ENCODE measurements at regions of chr11 and their contacts with region 1.

Region 1: DNA sequence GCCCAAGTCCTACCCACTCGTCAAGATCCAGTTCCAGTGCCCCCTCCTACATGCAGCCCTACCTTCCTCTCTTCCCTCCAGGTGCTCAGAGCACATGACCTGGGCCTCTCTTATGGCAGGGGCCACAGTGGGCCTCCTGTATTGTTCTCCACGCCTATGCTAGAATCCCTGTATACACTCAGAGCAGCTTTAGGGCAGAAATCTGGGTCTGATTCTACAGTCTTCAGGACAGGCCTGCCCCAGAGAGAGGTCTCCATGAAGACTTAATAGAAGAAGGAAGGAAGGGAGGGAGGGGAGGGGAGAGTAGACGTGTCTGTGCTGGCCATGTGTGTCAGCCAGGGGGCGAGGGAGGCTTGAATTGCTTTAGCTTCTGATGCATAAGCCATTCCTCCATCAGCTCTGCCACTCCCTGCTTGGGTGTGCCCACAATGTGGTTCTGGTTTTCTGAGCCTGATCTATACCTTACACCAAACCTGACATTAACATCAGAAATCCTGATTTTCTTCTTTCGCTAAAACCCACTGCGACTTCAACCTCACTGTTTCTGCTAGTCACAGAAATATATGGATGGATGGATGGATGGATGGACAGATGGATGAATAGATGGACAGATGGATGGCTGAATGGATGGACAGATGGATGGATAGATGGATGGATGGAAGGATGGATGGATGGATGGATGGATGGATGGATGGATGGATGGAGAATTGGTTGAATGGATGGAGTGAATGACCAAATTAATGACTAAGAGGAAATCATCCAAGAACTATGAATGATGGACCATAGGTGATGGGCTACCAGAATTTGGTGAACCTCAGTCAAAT is 56.6 kb upstream of the PRDM11 start:
- DNase-seq: peak in 3 of 42 donors; percentile 7 to 35 (median 22)

Region 2: DNA sequence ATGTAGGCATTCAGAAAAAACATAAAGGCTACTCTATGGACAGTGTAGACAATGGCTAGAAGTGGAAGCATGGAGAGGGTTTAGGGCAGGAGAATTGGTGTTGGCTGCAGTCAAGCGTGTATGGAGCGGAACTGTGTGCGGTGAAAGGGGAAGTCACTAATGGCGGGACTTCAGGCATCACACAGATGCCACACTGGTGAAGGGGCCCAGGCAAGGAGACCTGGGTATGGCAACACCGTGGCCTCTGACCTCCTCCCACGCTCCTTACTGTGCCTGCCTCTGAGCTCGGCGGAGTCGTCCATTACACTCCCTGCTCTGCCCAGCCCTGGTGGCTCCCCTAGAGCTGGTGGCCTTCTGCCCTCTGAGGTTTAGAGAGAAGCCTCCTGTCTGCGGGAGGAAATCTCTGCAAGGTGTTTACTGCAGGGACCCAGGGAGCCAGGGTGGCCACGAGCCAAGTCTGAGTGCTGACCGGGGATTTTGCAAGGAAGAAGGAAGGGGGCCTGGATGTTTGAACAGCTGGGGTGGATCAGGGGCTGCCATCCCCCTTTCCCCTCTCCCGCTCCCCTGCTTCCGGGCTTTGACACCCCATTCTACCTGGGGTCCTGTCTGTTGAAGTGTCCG is 438.2 kb before region 1 on chr11:
- intact Hi-C with region 1: no loop called
- DNase-seq: no peak

Region 3: GRCh38 chr11:44949160-44950030 is 140.5 kb before region 1 on chr11:
- intact Hi-C with region 1: loop called (anchors 5 kb)
- DNase-seq: no peak

Measured in head of caudate nucleus (tissue), 42 donors.